Head of caudate nucleus (tissue), 42 donors: ENCODE measurements at regions of chr6 and their contacts with region 1.

Region 1: DNA sequence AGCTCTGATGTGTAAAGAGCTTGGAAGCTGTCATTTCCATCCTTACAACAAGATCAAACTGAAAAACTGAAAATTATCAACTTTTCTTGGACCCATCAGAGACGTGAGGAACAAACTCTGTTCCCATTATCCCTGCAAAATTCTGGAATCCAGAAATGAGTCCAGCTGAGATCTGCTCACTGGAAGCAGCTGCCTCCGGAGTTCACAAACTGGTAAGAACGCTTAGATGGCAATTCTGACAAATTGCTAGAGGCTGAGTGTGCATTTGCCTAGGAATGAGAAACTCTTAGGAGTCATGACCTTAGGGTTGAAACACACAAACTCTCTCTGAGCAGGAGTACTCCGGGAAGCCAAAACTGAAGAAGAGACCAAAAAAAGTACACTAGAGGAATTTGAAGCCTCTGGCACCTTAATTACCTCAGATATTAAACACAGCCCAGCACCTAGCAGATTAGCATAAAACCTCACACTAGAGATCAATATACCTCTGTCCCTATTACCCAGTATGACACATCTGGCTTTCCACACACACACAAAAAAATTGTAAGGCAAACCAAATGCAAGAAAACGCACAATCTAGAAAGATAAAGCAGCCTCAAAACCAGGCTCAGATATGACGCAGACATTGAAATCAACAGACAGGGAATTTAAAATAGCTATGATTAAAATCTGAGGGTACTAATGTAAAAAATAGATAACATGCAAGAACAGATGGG is 233.5 kb upstream of the SGK1 start:
- DNase-seq: peak in 2 of 42 donors; percentile 43 to 55

Region 2: GRCh38 chr6:134477991-134478635 is 73.3 kb before region 1 on chr6:
- intact Hi-C with region 1: loop called (anchors 10 kb)
- DNase-seq: no peak

Region 3: DNA sequence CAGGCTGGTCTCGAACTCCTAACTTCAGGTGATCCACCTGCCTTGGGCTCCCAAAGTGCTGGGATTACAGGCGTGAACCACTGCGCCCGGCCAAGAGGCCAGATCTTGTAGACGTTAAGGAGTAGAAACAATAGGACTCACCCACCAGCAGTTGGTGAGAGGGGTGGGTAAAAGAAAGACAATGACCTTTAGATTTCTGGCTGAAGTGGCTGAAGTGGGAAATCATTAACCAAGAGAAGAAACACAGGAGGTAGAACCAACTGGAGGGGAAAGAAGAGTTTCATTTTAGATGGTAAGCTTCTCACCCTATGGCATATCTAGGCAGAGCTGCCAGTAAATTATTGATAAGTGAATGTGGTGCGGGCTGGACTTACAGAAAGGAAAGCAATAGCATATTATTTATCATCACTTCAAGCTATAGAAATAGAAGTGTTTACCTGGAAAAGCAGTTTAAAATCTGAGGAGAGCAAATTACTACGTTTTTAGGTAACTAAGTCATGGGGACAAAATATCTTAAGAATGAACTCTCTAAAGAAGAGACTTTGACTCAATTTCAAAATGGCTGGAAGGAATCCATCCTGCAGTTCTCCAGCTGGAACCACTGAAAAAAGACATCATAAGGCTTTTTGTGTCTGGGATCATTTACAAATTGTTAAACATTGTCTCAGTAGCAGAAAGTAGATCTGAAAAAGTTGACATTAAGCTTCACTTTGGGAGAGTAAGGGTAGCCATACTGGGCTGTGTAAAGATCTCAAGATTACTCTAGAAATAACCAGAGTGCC is 288.9 kb after region 1 on chr6:
- intact Hi-C with region 1: no loop called
- DNase-seq: no peak